ENCODE measurements at regions of chr12 and their contacts with region 1.

Region 1: DNA sequence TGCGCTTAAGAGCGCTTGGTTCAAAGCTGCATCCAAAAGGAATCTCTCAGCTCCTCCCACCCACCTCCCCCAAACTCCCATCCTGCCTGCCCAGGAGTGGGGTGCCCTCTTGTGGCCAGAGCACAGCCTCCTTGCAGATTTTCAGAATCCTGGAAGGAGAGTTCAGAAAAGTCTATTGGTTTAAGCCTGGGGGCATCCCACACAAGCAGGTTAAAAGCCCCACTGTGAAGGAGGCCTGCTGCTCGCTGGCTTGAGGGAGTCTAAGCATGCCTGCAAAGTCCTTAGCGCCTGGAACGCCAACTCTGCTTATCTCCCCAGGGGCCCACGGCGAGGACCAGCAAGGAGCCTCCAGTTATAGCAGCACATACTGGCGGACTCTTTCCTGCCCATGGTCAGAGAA is 297.1 kb downstream of the KSR2 start:
- DNase-seq: peak; percentile 91
- ATAC-seq: peak; percentile 92
- H3K4me3 Mint-ChIP-seq: no peak overlapping the region
- H3K27ac Mint-ChIP-seq: 0 out of 2 replicates have a peak overlapping the region, but pooled peaks have one; percentile 32
- H3K4me1 Mint-ChIP-seq: peaks cover 8% of the 10 kb centered on the region
- H3K27me3 Mint-ChIP-seq: no peaks in the 10 kb centered on the region; the same call in 1 of the 2 replicates
- CTCF ChIP-seq: peak; percentile 53

Region 2: GRCh38 chr12:117587631-117588287 is 84.0 kb before region 1 on chr12:
- CTCF ChIA-PET with region 1: interaction called, 20 read pairs
- POLR2A ChIA-PET with region 1: no interaction called
- DNase-seq: peak; percentile 81
- ATAC-seq: peak; percentile 86
- H3K4me3 Mint-ChIP-seq: no peak overlapping the region
- H3K27ac Mint-ChIP-seq: no peak overlapping the region
- H3K4me1 Mint-ChIP-seq: peaks cover 39% of the 10 kb centered on the region
- H3K27me3 Mint-ChIP-seq: no peaks in the 10 kb centered on the region
- CTCF ChIP-seq: peak; percentile 91

Region 3: GRCh38 chr12:117607778-117608177 is 64.0 kb before region 1 on chr12:
- CTCF ChIA-PET with region 1: interaction called, 13 read pairs
- POLR2A ChIA-PET with region 1: interaction called, 4 read pairs
- DNase-seq: no peak
- ATAC-seq: peak; percentile 53
- H3K4me3 Mint-ChIP-seq: no peak overlapping the region
- H3K27ac Mint-ChIP-seq: no peak overlapping the region
- H3K4me1 Mint-ChIP-seq: peaks cover 22% of the 10 kb centered on the region
- H3K27me3 Mint-ChIP-seq: no peaks in the 10 kb centered on the region
- CTCF ChIP-seq: no peak

Region 4: GRCh38 chr12:117685110-117685926 is 13.6 kb after region 1 on chr12:
- CTCF ChIA-PET with region 1: interaction called, 19 read pairs
- POLR2A ChIA-PET with region 1: interaction called, 3 read pairs
- DNase-seq: peak; percentile 85
- ATAC-seq: peak; percentile 100
- H3K4me3 Mint-ChIP-seq: peak overlapping the region; percentile 43
- H3K27ac Mint-ChIP-seq: peak overlapping the region; percentile 98
- H3K4me1 Mint-ChIP-seq: peaks cover 20% of the 10 kb centered on the region
- H3K27me3 Mint-ChIP-seq: no peaks in the 10 kb centered on the region
- CTCF ChIP-seq: no peak

Region 5: GRCh38 chr12:117695956-117696355 is 24.2 kb after region 1 on chr12:
- CTCF ChIA-PET with region 1: interaction called, 10 read pairs
- POLR2A ChIA-PET with region 1: no interaction called
- DNase-seq: no peak
- ATAC-seq: no peak
- H3K4me3 Mint-ChIP-seq: no peak overlapping the region
- H3K27ac Mint-ChIP-seq: no peak overlapping the region
- H3K4me1 Mint-ChIP-seq: peaks cover 5% of the 10 kb centered on the region
- H3K27me3 Mint-ChIP-seq: no peaks in the 10 kb centered on the region; the same call in none of the 2 replicates
- CTCF ChIP-seq: no peak

Region 6: DNA sequence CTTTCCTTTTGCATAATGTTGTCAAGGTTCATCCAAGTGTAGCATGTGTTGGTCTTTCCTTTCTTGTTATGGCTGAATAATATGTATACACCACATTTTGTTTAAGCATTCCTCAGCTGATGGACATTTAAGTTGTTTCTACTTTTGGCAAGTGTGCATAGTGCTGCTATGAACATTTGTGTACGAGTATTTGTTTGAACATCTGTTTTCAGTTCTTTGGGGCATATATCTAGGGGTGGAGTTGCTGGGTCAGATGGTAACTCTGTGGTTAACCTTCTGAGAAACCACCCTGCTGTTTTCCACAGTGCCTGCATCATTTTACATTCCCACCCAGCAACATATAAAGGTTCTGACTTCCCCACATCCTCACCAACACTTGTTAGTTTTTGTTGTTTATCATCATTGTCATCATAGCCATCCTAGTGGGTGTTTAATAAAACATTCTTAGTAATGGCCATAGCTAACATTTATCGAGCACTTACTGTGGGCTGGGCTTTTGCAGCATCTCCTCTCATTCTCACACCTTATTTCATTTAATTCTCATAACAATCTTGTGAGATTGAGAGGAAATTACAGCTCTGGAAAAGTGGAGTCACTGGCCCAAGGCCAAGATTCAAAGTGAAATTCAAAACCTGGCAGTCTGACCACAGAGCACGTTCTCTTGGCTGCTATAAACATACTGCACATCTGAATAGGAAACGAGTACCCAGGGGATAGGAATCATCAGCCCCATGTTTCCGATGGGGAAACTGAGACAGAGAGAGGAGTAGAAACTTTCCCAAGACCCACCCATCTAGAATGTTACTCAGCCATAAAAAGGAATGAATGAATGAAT is 103.4 kb after region 1 on chr12:
- CTCF ChIA-PET with region 1: no interaction called
- POLR2A ChIA-PET with region 1: no interaction called
- DNase-seq: no peak
- ATAC-seq: no peak
- H3K4me3 Mint-ChIP-seq: no peak overlapping the region
- H3K27ac Mint-ChIP-seq: peak overlapping the region; percentile 1; the same call in 1 of the 2 replicates
- H3K4me1 Mint-ChIP-seq: peaks cover 4% of the 10 kb centered on the region; the same call in 1 of the 2 replicates
- H3K27me3 Mint-ChIP-seq: no peaks in the 10 kb centered on the region
- CTCF ChIP-seq: no peak

Region 7: DNA sequence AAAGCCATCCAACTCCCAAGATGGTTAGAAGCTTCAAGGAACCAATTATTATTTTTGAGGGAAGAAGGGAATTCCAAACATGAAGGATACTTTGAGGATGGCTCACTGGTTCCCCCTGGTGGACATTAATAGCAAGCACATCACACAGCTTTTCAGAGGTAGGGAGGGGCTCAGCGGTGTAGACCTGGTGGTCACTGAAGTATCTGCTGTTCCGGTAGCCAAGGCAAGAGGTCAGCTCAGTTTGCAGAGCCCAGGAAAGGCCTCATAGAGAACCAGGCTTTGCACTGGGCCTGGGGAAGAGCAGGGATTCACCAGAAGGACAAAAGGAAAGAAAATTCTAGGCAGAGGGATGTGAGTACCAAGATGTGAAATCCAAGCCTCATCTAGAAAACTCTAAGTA is 178.3 kb after region 1 on chr12:
- CTCF ChIA-PET with region 1: interaction called, 15 read pairs
- POLR2A ChIA-PET with region 1: no interaction called
- DNase-seq: peak; percentile 45
- ATAC-seq: peak; percentile 88
- H3K4me3 Mint-ChIP-seq: no peak overlapping the region
- H3K27ac Mint-ChIP-seq: no peak overlapping the region
- H3K4me1 Mint-ChIP-seq: peaks cover 28% of the 10 kb centered on the region
- H3K27me3 Mint-ChIP-seq: no peaks in the 10 kb centered on the region
- CTCF ChIP-seq: peak; percentile 92

Measured in WTC11 (cell line).